Heart right ventricle (tissue), 16 donors: ENCODE measurements at regions of chr5 and their contacts with region 1.

Region 1: DNA sequence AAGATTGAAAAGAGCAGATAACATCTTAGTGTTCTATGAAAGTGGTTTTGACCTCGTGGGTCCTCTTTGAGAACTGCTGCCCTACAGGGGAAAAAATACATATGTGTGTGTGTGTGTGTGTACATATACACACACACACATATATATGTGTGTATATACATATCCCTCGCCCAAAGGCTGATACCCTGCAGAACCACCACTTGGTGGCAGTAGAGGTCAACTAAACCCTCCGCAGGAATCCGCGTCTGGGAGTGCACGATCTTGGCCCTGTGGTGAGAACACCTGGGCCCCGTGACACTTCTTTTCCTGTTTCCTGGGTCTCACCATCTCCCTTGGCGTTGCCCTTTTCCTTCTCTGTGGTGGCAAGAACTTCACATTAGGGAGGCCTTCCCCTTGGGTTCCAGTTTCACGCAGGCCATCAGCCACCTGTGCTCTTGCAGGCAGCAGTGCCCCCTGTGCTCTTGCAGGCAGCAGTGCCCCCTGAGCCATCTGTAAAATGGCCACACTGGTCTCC is 8.2 kb downstream of the IL9 start:
- DNase-seq: peak; percentile 27 to 37
- ATAC-seq: peak; percentile 69 to 89 (median 84)
- H3K4me3 ChIP-seq: no peak overlapping the region
- H3K27ac ChIP-seq: no peak overlapping the region
- H3K4me1 ChIP-seq: peaks cover 0 to 19% (median 4%) of the 10 kb centered on the region in 9 donors
- H3K27me3 ChIP-seq: peaks cover 0 to 47% (median 31%) of the 10 kb centered on the region in 7 donors
- CTCF ChIP-seq: peak; percentile 62 to 91 (median 88)

Region 2: DNA sequence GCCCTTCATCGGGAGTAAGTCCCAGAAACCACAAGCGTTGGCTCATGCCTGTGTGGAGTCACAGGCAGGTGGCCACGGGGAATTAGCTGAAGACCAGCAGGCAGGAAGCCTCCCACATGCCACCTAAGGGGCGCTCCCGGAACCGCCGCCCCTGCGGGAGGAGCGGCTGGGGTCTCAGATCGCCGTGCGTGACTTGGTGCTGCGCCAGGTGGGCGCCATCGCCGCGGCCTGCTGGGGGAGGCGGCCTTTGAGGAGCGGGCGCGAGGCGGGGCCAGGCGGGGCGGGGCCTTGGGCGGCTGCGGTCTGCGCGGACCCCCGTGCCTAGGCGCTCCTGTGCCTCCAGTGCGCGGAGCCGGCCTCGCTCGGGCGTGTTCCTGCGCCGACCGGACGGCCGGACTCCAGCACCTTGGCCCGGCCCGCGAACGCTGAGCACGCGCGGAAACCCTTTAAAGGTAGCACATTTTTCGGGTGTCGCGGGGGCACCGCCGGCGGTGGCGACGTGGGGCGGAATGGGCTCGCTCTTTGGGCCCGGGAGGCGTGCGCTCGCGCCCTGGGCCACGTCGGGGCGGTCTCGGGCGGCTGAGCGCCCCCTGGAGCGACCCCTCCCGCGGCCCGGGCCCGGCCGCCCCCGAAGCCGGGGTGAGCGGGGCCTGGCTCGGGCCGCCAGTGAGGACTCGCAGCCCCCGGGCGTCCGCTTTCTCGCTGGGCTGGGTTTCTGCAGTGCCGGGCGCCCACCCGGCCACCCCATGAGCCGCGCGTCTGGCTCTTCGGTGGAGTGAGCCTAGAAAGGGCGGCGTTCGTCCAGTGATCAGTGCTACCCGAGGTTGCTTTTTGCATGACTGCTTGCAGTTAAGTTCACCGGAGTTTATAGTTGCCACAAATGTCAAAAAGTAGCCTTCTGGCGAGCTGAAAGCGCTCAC is 42.9 kb after region 1 on chr5:
- intact Hi-C with region 1: no loop called
- DNase-seq: peak in 1 of 2 donors; percentile 12
- ATAC-seq: peak in 2 of 8 donors; percentile 25 to 33
- H3K4me3 ChIP-seq: peak overlapping the region; percentile 12 to 45 (median 34)
- H3K27ac ChIP-seq: no peak overlapping the region
- H3K4me1 ChIP-seq: peaks cover 0 to 11% (median 3%) of the 10 kb centered on the region in 9 donors
- H3K27me3 ChIP-seq: peaks cover 10 to 82% (median 68%) of the 10 kb centered on the region in 7 donors
- CTCF ChIP-seq: no peak

Region 3: DNA sequence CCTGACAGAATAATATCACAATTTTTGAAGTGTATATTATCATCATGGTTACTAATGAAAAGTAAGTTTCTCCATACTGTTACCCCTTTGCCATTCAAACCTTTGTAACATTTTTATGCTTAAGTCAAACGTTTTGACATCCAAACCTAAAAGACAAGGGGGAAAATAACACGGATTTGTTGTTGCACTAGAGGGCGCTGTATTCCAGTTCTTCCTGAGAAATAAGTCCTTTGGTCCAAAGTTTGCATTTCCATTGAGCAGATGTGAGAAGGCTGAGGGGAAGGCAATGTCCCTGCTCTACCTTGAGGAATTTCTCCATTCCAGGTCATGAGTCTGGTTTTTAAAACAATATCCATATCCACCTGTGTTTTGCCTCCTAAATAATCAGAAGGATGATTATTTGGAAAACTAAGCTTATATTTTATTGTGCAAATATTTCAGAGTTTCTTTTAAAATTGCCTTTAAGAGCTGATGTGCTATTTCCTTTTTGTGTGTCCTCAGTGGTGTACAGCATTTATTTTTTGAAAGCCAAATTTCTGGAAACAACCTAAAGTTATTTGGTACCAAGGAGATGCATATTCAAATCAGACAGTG is 57.7 kb after region 1 on chr5:
- intact Hi-C with region 1: loop called in 3 of 10 experiments (anchors 5 kb)
- DNase-seq: peak in 1 of 2 donors; percentile 68
- ATAC-seq: peak in 5 of 8 donors; percentile 55 to 76 (median 68)
- H3K4me3 ChIP-seq: no peak overlapping the region
- H3K27ac ChIP-seq: no peak overlapping the region
- H3K4me1 ChIP-seq: peaks cover 0 to 8% (median 0%) of the 10 kb centered on the region in 9 donors
- H3K27me3 ChIP-seq: peaks cover 0 to 19% (median 0%) of the 10 kb centered on the region in 7 donors
- CTCF ChIP-seq: peak; percentile 67 to 89 (median 79)

Region 4: GRCh38 chr5:136053336-136054141 is 166.1 kb after region 1 on chr5:
- intact Hi-C with region 1: no loop called
- DNase-seq: no peak
- ATAC-seq: peak in 5 of 8 donors; percentile 3 to 57 (median 21)
- H3K4me3 ChIP-seq: no peak overlapping the region
- H3K27ac ChIP-seq: peak overlapping the region in 8 of 10 donors; percentile 28 to 61 (median 50)
- H3K4me1 ChIP-seq: peaks cover 0 to 38% (median 29%) of the 10 kb centered on the region in 9 donors
- H3K27me3 ChIP-seq: no peaks in the 10 kb centered on the region
- CTCF ChIP-seq: no peak

Region 5: DNA sequence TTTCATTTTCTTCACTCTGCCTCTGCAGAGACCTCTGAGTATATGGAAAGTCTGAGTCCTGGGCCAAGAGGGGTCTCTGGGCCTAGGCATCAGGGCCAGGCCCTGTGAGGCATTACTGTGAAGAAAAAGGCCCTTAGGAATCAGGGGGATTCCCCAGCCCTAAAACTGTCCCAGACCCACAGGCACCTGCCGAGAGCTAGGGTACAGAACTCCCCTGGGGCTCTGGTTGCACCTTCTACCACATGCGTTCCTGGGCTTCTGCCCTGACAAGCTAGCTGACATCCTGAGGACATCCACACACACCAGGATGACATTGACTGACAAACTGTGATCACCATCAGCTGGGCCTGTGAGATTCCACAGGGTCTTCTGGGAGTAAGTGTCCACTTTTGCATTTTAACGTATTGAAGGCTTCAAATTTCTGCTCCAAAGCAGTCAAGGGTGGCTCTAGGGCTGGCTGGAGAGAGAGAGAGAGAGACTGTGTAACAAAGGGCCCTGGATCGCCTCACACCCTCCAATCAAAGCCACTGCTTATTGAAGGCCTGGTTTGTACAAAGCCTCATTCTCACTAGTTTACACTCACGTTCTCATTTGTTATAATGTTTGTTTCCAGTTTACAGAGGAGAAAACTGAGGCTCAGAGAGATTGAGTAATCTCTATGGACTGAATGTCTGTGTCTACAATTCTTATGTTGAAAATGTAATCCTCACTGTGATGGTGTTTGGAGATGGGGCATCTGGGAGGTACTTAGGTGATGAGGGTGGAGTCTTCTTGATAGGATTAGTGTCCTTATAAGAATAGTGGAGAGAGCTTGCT is 186.5 kb after region 1 on chr5:
- intact Hi-C with region 1: loop called in 1 of 10 experiments (anchors 10 kb)
- DNase-seq: no peak
- ATAC-seq: no peak
- H3K4me3 ChIP-seq: no peak overlapping the region
- H3K27ac ChIP-seq: no peak overlapping the region
- H3K4me1 ChIP-seq: peaks cover 0 to 29% (median 14%) of the 10 kb centered on the region in 9 donors
- H3K27me3 ChIP-seq: peaks cover 0 to 7% (median 0%) of the 10 kb centered on the region in 7 donors
- CTCF ChIP-seq: no peak

Region 6: GRCh38 chr5:136080483-136081216 is 193.2 kb after region 1 on chr5:
- intact Hi-C with region 1: loop called in 3 of 10 experiments (anchors 5 to 10 kb)
- DNase-seq: peak; percentile 84 to 87
- ATAC-seq: peak; percentile 89 to 98 (median 93)
- H3K4me3 ChIP-seq: peak overlapping the region in 9 of 10 donors; percentile 23 to 51 (median 39)
- H3K27ac ChIP-seq: peak overlapping the region; percentile 65 to 88 (median 75)
- H3K4me1 ChIP-seq: peaks cover 0 to 46% (median 22%) of the 10 kb centered on the region in 9 donors
- H3K27me3 ChIP-seq: peaks cover 0 to 28% (median 0%) of the 10 kb centered on the region in 7 donors
- CTCF ChIP-seq: no peak

Region 7: GRCh38 chr5:136212252-136212721 is 324.9 kb after region 1 on chr5:
- intact Hi-C with region 1: loop called (anchors 1 to 5 kb)
- DNase-seq: peak; percentile 32 to 64
- ATAC-seq: peak in 5 of 8 donors; percentile 46 to 65 (median 54)
- H3K4me3 ChIP-seq: no peak overlapping the region
- H3K27ac ChIP-seq: no peak overlapping the region
- H3K4me1 ChIP-seq: no peaks in the 10 kb centered on the region
- H3K27me3 ChIP-seq: peaks cover 0 to 45% (median 27%) of the 10 kb centered on the region in 7 donors
- CTCF ChIP-seq: peak; percentile 58 to 95 (median 90)